ENCODE measurements at regions of chr9 and their contacts with region 1.

Region 1: GRCh38 chr9:33225319-33226149 is 14.4 kb upstream of the SPINK4 start:
- DNase-seq: no peak
- ATAC-seq: peak; percentile 42 to 45
- H3K4me3 ChIP-seq: no peak overlapping the region
- H3K27ac ChIP-seq: peak overlapping the region; percentile 24
- H3K4me1 ChIP-seq: peaks cover 23% of the 10 kb centered on the region
- H3K27me3 ChIP-seq: no peaks in the 10 kb centered on the region
- CTCF ChIP-seq: peak; percentile 76

Region 2: GRCh38 chr9:33081128-33081851 is 144.2 kb before region 1 on chr9:
- intact Hi-C with region 1: loop called (anchors 5 kb)
- DNase-seq: no peak
- ATAC-seq: peak; percentile 73
- H3K4me3 ChIP-seq: peak overlapping the region; percentile 12
- H3K27ac ChIP-seq: peak overlapping the region; percentile 59
- H3K4me1 ChIP-seq: peaks cover 28% of the 10 kb centered on the region
- H3K27me3 ChIP-seq: no peaks in the 10 kb centered on the region
- CTCF ChIP-seq: peak; percentile 75

Region 3: DNA sequence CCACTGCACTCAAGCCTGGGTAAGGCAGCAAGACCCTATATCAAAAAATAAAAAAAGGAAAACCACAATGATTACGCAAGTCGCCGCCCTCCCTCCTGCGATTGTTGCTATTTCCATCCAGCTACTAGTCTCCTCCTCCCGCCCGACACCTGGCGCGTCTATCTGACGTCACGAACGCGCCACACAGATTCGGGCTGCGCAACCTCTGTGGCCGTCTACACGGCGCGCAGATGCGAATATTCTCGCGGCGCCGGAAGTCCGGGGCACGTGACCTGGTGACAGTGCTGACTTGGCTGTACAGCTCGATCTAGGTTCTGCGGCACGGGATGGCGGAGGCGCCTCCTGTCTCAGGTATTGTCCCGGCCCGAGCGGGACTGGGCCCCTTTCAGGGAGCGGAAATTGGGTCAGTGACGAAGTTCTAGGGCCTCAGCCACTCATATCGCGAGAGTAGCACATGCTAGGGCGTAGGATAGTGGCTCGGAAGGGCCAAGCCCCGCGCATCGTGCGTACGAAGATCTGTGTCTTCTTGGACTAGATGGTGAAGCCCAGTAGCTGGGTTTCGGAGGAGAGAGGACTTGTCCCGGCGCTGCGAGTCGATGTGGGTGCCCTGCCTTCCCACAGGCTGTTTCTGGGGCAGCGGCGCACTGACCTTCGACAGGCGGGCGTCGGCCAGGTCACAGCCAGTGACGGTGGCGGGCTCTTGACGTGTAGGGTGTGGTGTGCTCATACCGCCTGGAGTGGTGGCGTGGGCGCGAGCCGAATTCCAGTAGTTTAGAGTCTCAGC is 64.9 kb after region 1 on chr9 and contains the start of gene NFX1:
- intact Hi-C with region 1: no loop called
- DNase-seq: peak; percentile 99
- ATAC-seq: peak; percentile 95 to 97
- H3K4me3 ChIP-seq: peak within 1 kb of the TSS; percentile 89
- H3K27ac ChIP-seq: peak within 1 kb of the TSS; percentile 100
- H3K4me1 ChIP-seq: peaks cover 63% of the 10 kb centered on the region
- H3K27me3 ChIP-seq: no peaks in the 10 kb centered on the region
- CTCF ChIP-seq: no peak
- total RNA-seq, gene NFX1: 36.2 TPM